ENCODE measurements at regions of chr6 and their contacts with region 1.

Region 1: GRCh38 chr6:142301651-142302370 is at the start of gene ADGRG6:
- DNase-seq: peak; percentile 66
- H3K4me3 Mint-ChIP-seq: peak within 1 kb of the TSS; percentile 87
- H3K27ac Mint-ChIP-seq: peak within 1 kb of the TSS; percentile 69
- H3K4me1 Mint-ChIP-seq: peaks cover 35% of the 10 kb centered on the region
- H3K27me3 Mint-ChIP-seq: no peaks in the 10 kb centered on the region
- CTCF ChIP-seq: no peak
- total RNA-seq, gene ADGRG6: 28.8 and 44.2 TPM in 2 replicates

Region 2: DNA sequence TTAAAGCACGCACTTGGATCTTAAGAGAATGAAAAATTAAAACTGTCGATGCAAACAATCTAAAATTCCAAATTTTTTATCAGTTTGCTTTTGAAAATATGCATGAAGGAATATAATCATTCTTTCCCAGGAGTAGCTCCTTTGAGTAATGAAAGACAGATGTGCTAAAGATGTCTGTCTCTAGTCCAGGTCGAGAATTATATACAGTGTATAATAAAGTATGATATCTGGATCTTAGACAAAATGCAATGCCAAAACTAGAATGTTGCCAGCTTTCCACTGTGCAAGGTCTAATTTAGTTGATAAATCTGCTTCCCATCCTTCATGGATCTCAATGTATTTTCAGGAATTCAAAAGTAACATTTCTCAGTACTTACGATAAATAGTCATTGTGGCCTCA is 65.1 kb before region 1 on chr6:
- CTCF ChIA-PET with region 1: no interaction called
- POLR2A ChIA-PET with region 1: no interaction called
- intact Hi-C with region 1: no loop called
- DNase-seq: no peak
- H3K4me3 Mint-ChIP-seq: no peak overlapping the region
- H3K27ac Mint-ChIP-seq: no peak overlapping the region
- H3K4me1 Mint-ChIP-seq: no peaks in the 10 kb centered on the region
- H3K27me3 Mint-ChIP-seq: no peaks in the 10 kb centered on the region
- CTCF ChIP-seq: no peak

Region 3: DNA sequence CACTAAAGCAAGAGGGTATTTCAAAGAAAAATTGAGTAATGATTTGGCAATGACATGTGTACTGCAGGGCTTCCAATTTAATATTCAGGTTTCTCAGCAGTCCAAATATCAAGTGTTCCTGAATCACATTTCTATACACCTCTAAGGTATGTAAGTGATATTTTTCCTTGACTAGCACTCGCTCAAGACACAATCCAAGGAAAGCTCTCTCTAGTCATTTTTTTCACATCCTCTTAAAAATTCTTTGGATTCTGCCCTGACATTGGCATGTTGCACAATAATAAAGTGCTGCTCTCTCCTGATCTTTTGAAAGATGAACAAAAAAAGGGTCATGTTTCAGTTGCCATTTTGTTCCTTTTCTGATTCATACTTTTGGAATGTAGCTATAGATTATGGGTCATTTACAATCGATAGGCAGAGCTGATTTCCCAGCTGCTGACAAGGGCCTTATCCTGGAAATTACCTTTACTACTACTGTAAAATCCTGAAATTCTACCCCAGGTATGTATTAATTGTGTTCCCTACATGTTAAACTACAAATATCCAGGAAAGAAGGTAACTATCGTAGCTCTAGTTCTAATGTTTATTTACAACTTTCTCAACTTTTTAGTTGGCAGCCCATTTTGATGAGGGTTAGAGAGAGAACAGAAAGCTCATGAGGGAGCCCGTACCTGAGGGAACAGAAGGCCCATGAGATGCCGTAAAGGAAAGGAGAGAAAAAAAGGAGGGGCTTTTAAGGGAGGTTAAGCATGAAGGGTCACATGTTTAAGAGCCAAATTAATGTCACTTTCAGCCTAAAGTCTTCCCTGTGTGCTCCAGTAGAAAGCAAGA is 22.2 kb before region 1 on chr6:
- CTCF ChIA-PET with region 1: no interaction called
- POLR2A ChIA-PET with region 1: interaction called, 12 read pairs
- intact Hi-C with region 1: no loop called
- DNase-seq: peak; percentile 36
- H3K4me3 Mint-ChIP-seq: no peak overlapping the region
- H3K27ac Mint-ChIP-seq: peak overlapping the region; percentile 64
- H3K4me1 Mint-ChIP-seq: peaks cover 12% of the 10 kb centered on the region
- H3K27me3 Mint-ChIP-seq: no peaks in the 10 kb centered on the region
- CTCF ChIP-seq: no peak

Region 4: DNA sequence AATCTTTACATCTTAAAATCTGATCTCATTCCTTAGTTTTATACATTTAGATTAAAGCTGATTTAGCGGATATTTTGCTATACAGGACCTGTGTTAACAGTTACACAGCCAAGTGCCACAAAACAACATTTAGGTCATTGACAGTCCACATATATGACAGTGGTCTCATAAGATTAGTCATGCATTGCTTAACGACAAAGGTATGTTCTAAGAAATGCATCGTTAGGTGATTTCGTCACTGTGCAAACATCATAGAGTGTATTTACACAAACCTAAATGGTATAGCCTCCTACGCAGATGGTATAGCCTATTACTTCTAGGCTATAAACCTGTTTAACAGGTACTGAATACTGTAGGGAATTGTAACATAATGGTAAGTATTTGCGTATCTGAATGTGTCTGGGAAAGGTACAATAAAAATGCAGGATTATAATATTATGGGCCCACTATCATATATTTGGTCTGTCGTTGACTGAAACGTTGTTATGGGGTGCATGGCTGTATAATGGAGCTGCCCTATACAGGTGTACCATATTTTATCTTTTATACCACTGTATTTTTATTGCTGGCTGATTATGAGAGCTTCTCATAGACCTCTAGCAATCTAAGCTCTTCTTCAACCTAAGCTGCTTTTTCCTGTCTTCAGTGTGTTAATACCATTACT is 21.7 kb after region 1 on chr6:
- CTCF ChIA-PET with region 1: no interaction called
- POLR2A ChIA-PET with region 1: interaction called, 21 read pairs
- intact Hi-C with region 1: no loop called
- DNase-seq: peak; percentile 80
- H3K4me3 Mint-ChIP-seq: no peak overlapping the region
- H3K27ac Mint-ChIP-seq: peak overlapping the region; percentile 11
- H3K4me1 Mint-ChIP-seq: peaks cover 23% of the 10 kb centered on the region
- H3K27me3 Mint-ChIP-seq: no peaks in the 10 kb centered on the region
- CTCF ChIP-seq: no peak

Region 5: DNA sequence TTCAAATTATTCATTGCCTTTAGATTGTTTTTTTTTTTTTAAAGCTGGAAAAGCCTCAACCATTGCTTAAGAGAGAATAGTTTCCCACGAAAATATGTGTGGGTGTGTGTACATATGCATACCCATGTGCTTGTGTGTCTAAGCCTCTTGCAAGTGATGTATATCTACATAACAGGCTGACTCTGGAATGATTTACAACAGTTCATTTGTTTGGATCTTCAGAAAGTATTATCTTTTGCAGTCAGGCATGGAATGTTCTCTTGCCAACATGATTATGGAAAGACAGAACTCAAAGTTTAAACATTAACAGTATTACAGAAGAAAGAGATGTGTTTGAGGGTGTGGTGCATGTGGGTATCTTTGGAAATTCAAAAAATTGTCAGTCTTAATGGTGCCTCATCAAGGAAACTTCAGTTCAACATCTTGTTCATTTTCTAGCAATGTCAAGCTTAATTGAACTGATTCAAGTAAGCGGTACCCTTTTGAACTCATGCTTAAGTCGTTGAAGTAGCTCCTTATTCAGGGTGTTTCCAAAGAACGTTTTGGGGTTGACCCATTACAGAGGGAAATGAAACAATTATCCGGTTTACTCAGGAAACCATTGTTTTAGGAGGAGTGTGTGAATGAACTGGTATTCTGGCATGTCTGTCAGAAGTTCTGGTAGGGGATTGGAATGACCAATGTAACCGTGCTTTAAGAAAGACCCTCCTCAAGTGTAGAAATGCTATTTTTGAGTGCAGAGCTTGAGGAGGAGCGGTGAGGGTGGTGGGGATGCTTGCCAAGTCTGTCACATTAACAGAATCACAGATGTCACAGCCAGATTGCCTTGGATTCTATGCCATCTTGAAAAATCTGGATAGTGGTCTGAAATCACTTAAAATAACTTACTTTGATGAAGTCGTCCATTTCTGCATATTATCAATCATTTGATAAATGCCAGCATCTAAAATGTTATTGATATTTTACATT is 60.3 kb after region 1 on chr6:
- CTCF ChIA-PET with region 1: interaction called, 3 read pairs
- POLR2A ChIA-PET with region 1: interaction called, 24 read pairs
- intact Hi-C with region 1: no loop called
- DNase-seq: peak; percentile 69
- H3K4me3 Mint-ChIP-seq: no peak overlapping the region
- H3K27ac Mint-ChIP-seq: no peak overlapping the region
- H3K4me1 Mint-ChIP-seq: peaks cover 26% of the 10 kb centered on the region
- H3K27me3 Mint-ChIP-seq: no peaks in the 10 kb centered on the region
- CTCF ChIP-seq: no peak

Region 6: DNA sequence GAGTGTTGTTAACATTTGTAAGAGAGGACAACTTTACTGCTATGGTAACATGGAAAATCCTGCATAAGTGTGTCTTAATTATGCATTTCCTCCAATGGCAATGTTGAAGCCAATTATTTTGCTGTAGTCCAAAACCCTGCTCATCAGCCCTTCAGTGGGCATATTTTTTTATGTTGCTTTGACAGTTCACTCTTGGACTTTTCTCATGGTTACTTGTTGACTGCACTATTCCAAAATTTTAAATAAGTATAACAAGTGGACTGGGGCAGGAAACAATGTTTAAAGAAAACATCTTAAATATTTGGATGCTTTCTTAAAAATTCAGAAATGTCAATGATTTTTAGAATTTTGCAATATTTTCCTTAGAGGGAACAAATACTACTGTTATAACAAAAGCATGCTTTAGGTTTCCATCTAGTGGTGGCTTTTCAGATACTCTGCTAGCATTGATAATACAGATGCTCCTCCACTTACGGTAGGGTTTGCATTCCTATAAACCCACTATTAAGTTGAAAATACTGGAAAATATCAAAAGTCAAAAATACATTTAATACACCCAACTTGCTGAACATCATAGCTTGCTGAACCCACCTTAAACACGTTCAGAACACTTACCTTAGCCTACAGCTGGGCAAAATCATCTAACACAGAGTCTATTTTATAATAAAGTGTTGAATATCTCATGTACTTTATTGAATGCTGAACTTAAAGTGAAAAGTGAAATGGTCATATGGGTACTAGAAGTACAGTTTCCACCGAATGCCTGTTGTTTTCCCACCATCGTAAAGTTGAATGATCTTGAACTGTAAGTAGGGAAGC is 86.4 kb after region 1 on chr6:
- CTCF ChIA-PET with region 1: interaction called, 13 read pairs
- POLR2A ChIA-PET with region 1: interaction called, 24 read pairs
- intact Hi-C with region 1: no loop called
- DNase-seq: peak; percentile 64
- H3K4me3 Mint-ChIP-seq: no peak overlapping the region
- H3K27ac Mint-ChIP-seq: no peak overlapping the region
- H3K4me1 Mint-ChIP-seq: no peaks in the 10 kb centered on the region
- H3K27me3 Mint-ChIP-seq: no peaks in the 10 kb centered on the region
- CTCF ChIP-seq: peak; percentile 70

Region 7: DNA sequence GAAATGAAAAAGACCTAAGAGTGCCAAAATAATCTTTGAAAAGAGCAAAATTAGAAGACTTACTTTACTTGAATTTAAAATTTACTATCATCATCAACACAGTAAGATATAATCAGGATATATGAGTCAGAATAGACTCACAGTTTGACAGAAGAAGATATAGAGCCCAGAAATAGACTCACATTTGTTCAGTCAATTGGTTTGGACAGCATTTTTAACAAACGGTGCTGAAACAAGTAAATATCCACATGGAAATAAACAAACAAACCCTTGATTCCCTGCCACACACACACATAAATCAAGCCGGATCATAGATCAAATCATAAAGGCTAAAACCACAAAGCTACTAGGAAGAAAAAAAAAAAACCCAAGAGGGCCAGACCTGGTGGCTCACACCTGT is 291.1 kb after region 1 on chr6:
- CTCF ChIA-PET with region 1: no interaction called
- POLR2A ChIA-PET with region 1: no interaction called
- intact Hi-C with region 1: no loop called
- DNase-seq: no peak
- H3K4me3 Mint-ChIP-seq: no peak overlapping the region
- H3K27ac Mint-ChIP-seq: no peak overlapping the region
- H3K4me1 Mint-ChIP-seq: no peaks in the 10 kb centered on the region
- H3K27me3 Mint-ChIP-seq: no peaks in the 10 kb centered on the region
- CTCF ChIP-seq: no peak